Caco-2 (cell line): ENCODE measurements at regions of chr10 and their contacts with region 1.

Region 1: DNA sequence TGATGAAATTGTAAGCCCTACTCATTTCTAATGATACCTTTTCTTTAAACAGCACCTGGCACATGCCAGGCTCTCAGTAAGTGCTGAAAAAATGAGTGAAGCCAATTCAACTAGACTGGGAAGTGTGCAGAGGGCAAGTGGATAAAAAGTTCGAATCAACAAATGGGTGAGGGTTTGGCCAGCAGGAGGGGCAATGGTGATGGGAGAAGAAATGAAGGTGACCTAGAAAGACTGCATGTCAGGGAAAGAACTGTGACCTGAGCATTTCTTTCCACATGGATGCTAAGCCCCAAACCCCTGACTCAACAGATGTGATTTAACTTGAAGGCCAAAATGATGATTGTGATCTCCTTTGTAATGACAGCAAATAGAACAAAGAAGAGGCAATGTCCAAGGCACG is 54.7 kb downstream of the DKK1 start:
- DNase-seq: no peak
- H3K4me3 ChIP-seq: no peak overlapping the region
- H3K4me3 Mint-ChIP-seq: no peak overlapping the region
- H3K27ac Mint-ChIP-seq: no peak overlapping the region
- H3K4me1 ChIP-seq: peaks cover 24% of the 10 kb centered on the region
- H3K4me1 Mint-ChIP-seq: peaks cover 27% of the 10 kb centered on the region
- H3K27me3 ChIP-seq: no peaks in the 10 kb centered on the region
- H3K27me3 Mint-ChIP-seq: no peaks in the 10 kb centered on the region
- CTCF ChIP-seq: peak in 1 of 2 experiments; percentile 18

Region 2: GRCh38 chr10:52334595-52334994 is 34.1 kb before region 1 on chr10:
- CTCF ChIA-PET with region 1: no interaction called
- POLR2A ChIA-PET with region 1: no interaction called
- intact Hi-C with region 1: loop called (anchors 1 kb)
- DNase-seq: no peak
- H3K4me3 ChIP-seq: no peak overlapping the region
- H3K4me3 Mint-ChIP-seq: no peak overlapping the region
- H3K27ac Mint-ChIP-seq: peak overlapping the region; percentile 33
- H3K4me1 ChIP-seq: peaks cover 45% of the 10 kb centered on the region
- H3K4me1 Mint-ChIP-seq: peaks cover 47% of the 10 kb centered on the region
- H3K27me3 ChIP-seq: no peaks in the 10 kb centered on the region
- H3K27me3 Mint-ChIP-seq: no peaks in the 10 kb centered on the region
- CTCF ChIP-seq: no peak

Region 3: DNA sequence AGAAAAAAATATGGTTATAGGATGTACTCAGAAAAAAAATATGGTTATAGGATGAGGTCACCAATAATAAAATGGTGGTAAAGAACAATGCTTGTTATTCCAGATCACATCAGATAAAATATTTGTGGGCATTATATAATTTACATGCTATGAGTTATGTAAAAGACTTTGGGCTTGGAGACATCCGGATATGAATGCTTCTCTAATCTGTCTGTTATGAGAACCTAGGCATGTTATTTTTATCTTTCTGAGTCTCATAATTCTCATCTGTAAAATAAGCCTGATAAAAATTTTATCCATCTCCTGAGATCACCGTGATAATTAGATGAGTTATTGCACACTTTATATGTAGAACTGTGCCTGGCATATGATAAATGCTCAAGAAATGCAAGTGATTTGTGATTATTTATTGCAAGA is 16.8 kb before region 1 on chr10:
- CTCF ChIA-PET with region 1: no interaction called
- POLR2A ChIA-PET with region 1: no interaction called
- intact Hi-C with region 1: no loop called
- DNase-seq: no peak
- H3K4me3 ChIP-seq: no peak overlapping the region
- H3K4me3 Mint-ChIP-seq: no peak overlapping the region
- H3K27ac Mint-ChIP-seq: no peak overlapping the region
- H3K4me1 ChIP-seq: peaks cover 41% of the 10 kb centered on the region
- H3K4me1 Mint-ChIP-seq: peaks cover 48% of the 10 kb centered on the region
- H3K27me3 ChIP-seq: no peaks in the 10 kb centered on the region
- H3K27me3 Mint-ChIP-seq: no peaks in the 10 kb centered on the region
- CTCF ChIP-seq: no peak